CD4-positive, alpha-beta T cell (primary cell): ENCODE measurements at regions of chr5 and their contacts with region 1.

Region 1: GRCh38 chr5:131514316-131515283 is 120.4 kb downstream of the RAPGEF6 start:
- DNase-seq: peak in 4 of 14 experiments; percentile 38 to 83 (median 79)
- ATAC-seq: peak; percentile 84
- H3K4me3 ChIP-seq: peak overlapping the region; percentile 30
- H3K4me3 Mint-ChIP-seq: peak overlapping the region; percentile 82
- H3K27ac ChIP-seq: peak overlapping the region; percentile 36 to 39
- H3K27ac Mint-ChIP-seq: peak overlapping the region; percentile 84
- H3K4me1 ChIP-seq: peaks cover 29% of the 10 kb centered on the region
- H3K4me1 Mint-ChIP-seq: peaks cover 84% of the 10 kb centered on the region
- H3K27me3 ChIP-seq: no peaks in the 10 kb centered on the region
- H3K27me3 Mint-ChIP-seq: no peaks in the 10 kb centered on the region
- CTCF ChIP-seq: peak; percentile 54

Region 2: DNA sequence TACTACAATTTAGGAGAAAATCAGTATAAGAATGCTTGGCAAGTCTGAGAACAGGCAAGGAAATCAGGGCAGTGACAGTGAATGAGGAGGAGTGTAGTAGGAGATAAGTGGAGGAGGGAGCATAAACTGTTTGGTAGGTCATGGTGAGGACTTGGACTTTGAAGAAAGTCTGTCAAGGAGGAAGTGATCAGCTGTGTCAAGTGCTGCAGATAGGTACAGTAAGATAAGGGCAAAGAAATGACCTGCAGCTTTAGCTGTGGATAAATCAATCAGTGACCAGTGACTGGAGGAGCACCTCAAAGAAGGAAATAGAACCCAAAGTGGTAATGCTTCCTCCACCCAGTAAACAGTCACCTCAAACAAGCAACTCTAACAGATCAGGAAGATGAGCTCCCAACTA is 14.1 kb after region 1 on chr5:
- CTCF ChIA-PET with region 1: interaction called, 6 read pairs
- POLR2A ChIA-PET with region 1: interaction called, 13 read pairs
- intact Hi-C with region 1: loop called in 1 of 2 experiments (anchors 1 kb)
- DNase-seq: no peak
- ATAC-seq: no peak
- H3K4me3 ChIP-seq: no peak overlapping the region
- H3K4me3 Mint-ChIP-seq: peak overlapping the region; percentile 37
- H3K27ac ChIP-seq: peak overlapping the region in 1 of 2 donors; percentile 16
- H3K27ac Mint-ChIP-seq: peak overlapping the region; percentile 59
- H3K4me1 ChIP-seq: peaks cover 31% of the 10 kb centered on the region
- H3K4me1 Mint-ChIP-seq: peaks cover 79% of the 10 kb centered on the region
- H3K27me3 ChIP-seq: no peaks in the 10 kb centered on the region
- H3K27me3 Mint-ChIP-seq: no peaks in the 10 kb centered on the region
- CTCF ChIP-seq: no peak